GM13976 (cell line): ENCODE measurements at regions of chr7 and their contacts with region 1.

Region 1: DNA sequence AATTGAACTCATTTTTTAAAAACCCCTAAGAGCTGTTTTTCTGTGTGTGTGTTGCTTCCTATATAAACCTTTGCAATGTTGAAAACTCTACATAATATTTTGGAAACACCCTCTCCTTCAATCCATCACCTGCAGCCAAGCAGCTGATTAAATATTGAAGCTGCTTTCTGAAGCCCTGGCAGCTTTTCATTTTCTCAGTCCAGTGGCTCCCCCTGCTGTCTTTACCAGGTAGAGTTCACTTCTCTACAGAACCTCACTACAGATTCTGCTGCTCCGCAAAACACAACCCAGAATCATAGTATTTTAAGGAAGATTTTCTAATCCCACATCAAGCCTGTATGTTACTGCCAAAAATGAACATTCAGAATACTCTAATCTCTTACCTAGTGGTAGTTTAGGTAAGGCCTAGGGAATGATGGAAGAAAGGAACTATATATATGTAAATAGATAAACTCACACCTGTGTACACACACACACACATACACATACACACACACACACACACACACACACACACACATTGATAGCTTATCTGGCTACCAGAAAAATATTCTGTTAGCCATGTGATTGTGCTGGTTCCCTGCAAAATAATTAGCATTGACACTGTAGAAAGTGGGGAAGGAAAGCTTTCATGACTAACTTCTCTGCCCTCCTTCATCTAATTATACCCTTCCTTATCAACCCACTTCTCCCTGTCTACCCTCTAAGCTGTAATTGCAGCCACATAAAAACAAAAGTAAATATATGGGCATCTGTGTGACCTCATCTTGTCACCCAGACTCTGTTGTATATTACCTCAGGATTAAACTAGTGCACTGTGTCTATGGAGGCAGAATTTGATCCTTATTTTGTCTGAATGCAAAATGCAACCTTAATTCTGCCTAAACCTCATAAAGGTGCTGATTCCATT is 229.5 kb upstream of the FZD1 start:
- DNase-seq: peak; percentile 56
- CTCF ChIP-seq: peak; percentile 59

Region 2: DNA sequence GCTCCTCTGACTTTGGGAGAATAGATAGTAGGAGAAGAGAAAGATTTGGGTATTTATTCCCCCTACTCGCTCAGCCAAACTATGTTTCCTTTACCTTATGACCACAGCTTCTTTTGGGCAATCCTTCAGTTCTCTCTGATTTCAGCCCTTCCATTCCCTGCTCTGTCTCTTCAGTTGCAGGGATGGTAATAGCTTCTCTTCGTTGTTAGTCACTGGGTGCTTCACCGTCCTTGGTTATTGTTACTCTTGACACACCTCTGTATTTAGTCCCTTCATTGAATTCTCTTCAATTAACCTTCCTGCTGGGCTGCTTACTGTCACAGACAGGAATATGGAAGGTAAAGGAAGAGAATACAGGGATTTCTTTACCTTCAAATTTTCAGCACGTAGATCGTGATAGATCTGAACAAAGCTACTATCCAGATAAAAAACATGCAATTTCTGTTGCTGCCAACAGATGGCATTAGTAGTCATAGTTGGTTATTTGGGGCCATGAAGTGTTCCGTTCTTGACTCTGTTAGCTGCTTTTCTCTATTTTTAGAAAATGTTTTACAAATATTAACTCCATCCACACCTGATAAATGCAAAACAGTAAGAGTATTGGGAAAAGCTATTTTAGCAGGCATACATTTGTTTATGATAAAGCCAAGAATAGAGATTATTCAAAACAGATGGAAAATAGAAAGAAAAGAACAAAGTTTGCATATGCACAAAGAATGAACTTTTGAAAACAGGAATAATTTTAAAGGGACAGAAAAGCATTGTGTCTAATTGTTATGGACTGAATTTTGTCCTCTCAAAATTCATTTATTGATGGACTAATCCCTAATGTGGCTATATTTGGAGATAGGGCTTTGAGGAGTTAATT is 579.3 kb before region 1 on chr7:
- in situ Hi-C with region 1: loop called (anchors 25 kb)
- DNase-seq: peak; percentile 59
- CTCF ChIP-seq: peak; percentile 46

Region 3: GRCh38 chr7:90708841-90709317 is 325.8 kb before region 1 on chr7:
- in situ Hi-C with region 1: loop called (anchors 25 kb)
- DNase-seq: peak; percentile 10
- CTCF ChIP-seq: peak; percentile 59

Region 4: GRCh38 chr7:91880413-91881241 is 845.9 kb after region 1 on chr7 and contains the start of gene MTERF1:
- in situ Hi-C with region 1: no loop called
- DNase-seq: peak; percentile 88
- CTCF ChIP-seq: peak; percentile 100